ENCODE measurements at regions of chr9 and their contacts with region 1.

Region 1: DNA sequence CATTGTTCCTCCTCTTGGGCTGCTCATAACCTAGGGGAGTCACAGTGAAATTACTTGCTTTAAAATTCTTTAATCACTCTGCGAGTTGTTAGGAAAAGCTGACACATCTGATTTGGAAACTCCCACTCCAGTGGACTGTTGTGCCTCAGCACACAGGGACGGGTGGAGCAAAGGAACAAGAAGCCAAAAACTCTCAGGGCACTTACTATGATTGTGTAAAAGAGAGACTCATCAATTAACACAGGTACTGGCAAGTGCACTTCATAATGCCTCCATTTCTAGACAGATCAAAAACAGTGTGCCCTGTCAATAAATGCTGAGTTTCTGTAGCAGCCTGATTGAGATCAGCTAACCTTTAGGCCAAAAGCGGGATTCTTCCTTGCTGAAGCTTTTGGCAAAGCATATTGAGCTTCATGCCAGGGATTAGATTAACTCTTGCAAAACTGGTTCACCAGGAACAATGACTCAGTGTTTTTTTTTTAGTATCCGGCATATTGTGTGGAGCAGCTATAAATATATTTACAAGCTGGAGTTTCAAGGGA is 55.9 kb downstream of the TMC1 start:
- DNase-seq: no peak
- H3K4me3 ChIP-seq: peak overlapping the region; percentile 43
- H3K27ac ChIP-seq: peak overlapping the region; percentile 85
- H3K4me1 ChIP-seq: peaks cover 51% of the 10 kb centered on the region
- H3K27me3 ChIP-seq: no peaks in the 10 kb centered on the region
- CTCF ChIP-seq: no peak

Region 2: GRCh38 chr9:72217306-72217842 is 359.9 kb before region 1 on chr9:
- intact Hi-C with region 1: no loop called
- DNase-seq: no peak
- H3K4me3 ChIP-seq: no peak overlapping the region
- H3K27ac ChIP-seq: no peak overlapping the region
- H3K4me1 ChIP-seq: no peaks in the 10 kb centered on the region
- H3K27me3 ChIP-seq: peaks cover 6% of the 10 kb centered on the region
- CTCF ChIP-seq: no peak

Region 3: GRCh38 chr9:72364679-72365524 is 212.4 kb before region 1 on chr9 and contains the start of gene ZFAND5:
- intact Hi-C with region 1: loop called (anchors 10 kb)
- DNase-seq: peak; percentile 99
- H3K4me3 ChIP-seq: peak within 1 kb of the TSS; percentile 86
- H3K27ac ChIP-seq: peak within 1 kb of the TSS; percentile 100
- H3K4me1 ChIP-seq: peaks cover 59% of the 10 kb centered on the region
- H3K27me3 ChIP-seq: no peaks in the 10 kb centered on the region
- CTCF ChIP-seq: no peak
- total RNA-seq, gene ZFAND5: 183 TPM

Region 4: GRCh38 chr9:72464857-72465592 is 112.3 kb before region 1 on chr9:
- intact Hi-C with region 1: no loop called
- DNase-seq: no peak
- H3K4me3 ChIP-seq: no peak overlapping the region
- H3K27ac ChIP-seq: peak overlapping the region; percentile 28
- H3K4me1 ChIP-seq: no peaks in the 10 kb centered on the region
- H3K27me3 ChIP-seq: no peaks in the 10 kb centered on the region
- CTCF ChIP-seq: no peak

Region 5: GRCh38 chr9:72635197-72635596 is 57.9 kb after region 1 on chr9:
- intact Hi-C with region 1: no loop called
- DNase-seq: no peak
- H3K4me3 ChIP-seq: no peak overlapping the region
- H3K27ac ChIP-seq: no peak overlapping the region
- H3K4me1 ChIP-seq: no peaks in the 10 kb centered on the region
- H3K27me3 ChIP-seq: no peaks in the 10 kb centered on the region
- CTCF ChIP-seq: no peak